Activated CD8-positive, alpha-beta T cell treated with anti-CD3 and anti-CD28 coated beads for 36 hours (primary cell): ENCODE measurements at regions of chr14 and their contacts with region 1.

Region 1: GRCh38 chr14:23631702-23632460 is 4.3 kb upstream of the DHRS2 start:
- DNase-seq: peak; percentile 73
- ATAC-seq: peak; percentile 89
- H3K4me3 Mint-ChIP-seq: peak overlapping the region; percentile 42
- H3K27ac Mint-ChIP-seq: no peak overlapping the region
- H3K4me1 Mint-ChIP-seq: peaks cover 4% of the 10 kb centered on the region
- H3K27me3 Mint-ChIP-seq: no peaks in the 10 kb centered on the region
- CTCF ChIP-seq: peak; percentile 97

Region 2: GRCh38 chr14:22982439-22983245 is 649.2 kb before region 1 on chr14 and contains the start of gene AJUBA:
- CTCF ChIA-PET with region 1: no interaction called
- POLR2A ChIA-PET with region 1: no interaction called
- intact Hi-C with region 1: no loop called
- DNase-seq: peak; percentile 84
- ATAC-seq: peak; percentile 76
- H3K4me3 Mint-ChIP-seq: no peak within 1 kb of the TSS
- H3K27ac Mint-ChIP-seq: no peak within 1 kb of the TSS
- H3K4me1 Mint-ChIP-seq: peaks cover 10% of the 10 kb centered on the region
- H3K27me3 Mint-ChIP-seq: no peaks in the 10 kb centered on the region
- CTCF ChIP-seq: no peak
- total RNA-seq, gene AJUBA: 2.3 to 2.6 TPM

Region 3: GRCh38 chr14:23605931-23606585 is 25.8 kb before region 1 on chr14:
- CTCF ChIA-PET with region 1: interaction called, 73 read pairs
- POLR2A ChIA-PET with region 1: no interaction called
- intact Hi-C with region 1: no loop called
- DNase-seq: peak; percentile 49
- ATAC-seq: peak; percentile 88
- H3K4me3 Mint-ChIP-seq: no peak overlapping the region
- H3K27ac Mint-ChIP-seq: peak overlapping the region; percentile 88
- H3K4me1 Mint-ChIP-seq: peaks cover 45% of the 10 kb centered on the region
- H3K27me3 Mint-ChIP-seq: no peaks in the 10 kb centered on the region
- CTCF ChIP-seq: no peak

Region 4: GRCh38 chr14:23646648-23647549 is 15.0 kb after region 1 on chr14:
- CTCF ChIA-PET with region 1: interaction called, 54 read pairs
- POLR2A ChIA-PET with region 1: interaction called, 4 read pairs
- intact Hi-C with region 1: no loop called
- DNase-seq: peak; percentile 15
- ATAC-seq: peak; percentile 42
- H3K4me3 Mint-ChIP-seq: no peak overlapping the region
- H3K27ac Mint-ChIP-seq: no peak overlapping the region
- H3K4me1 Mint-ChIP-seq: peaks cover 3% of the 10 kb centered on the region
- H3K27me3 Mint-ChIP-seq: no peaks in the 10 kb centered on the region
- CTCF ChIP-seq: no peak

Region 5: DNA sequence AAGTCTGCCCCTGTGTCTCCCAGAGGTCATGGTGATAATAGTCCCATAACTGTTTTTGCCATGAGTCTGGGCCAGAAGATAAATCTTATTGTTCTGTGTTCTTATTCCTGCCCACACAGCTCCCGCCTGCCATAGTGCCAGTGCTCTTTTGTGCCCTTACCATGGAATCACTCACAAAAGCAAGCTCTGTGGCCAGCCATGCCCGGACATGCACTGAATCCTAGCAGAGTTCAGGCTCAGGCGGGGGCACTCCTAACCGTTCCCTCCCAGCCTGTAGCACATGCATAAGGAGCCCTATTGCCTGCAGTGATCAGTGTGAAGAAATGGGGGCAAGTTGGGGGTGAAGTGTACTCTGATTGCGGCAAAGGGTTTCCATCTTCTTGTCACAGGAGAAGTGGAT is 37.6 kb after region 1 on chr14:
- CTCF ChIA-PET with region 1: interaction called, 12 read pairs
- POLR2A ChIA-PET with region 1: no interaction called
- intact Hi-C with region 1: no loop called
- DNase-seq: no peak
- ATAC-seq: no peak
- H3K4me3 Mint-ChIP-seq: no peak overlapping the region
- H3K27ac Mint-ChIP-seq: no peak overlapping the region
- H3K4me1 Mint-ChIP-seq: no peaks in the 10 kb centered on the region
- H3K27me3 Mint-ChIP-seq: peaks cover 3% of the 10 kb centered on the region
- CTCF ChIP-seq: no peak

Region 6: GRCh38 chr14:23727566-23728335 is 95.9 kb after region 1 on chr14:
- CTCF ChIA-PET with region 1: interaction called, 10 read pairs
- POLR2A ChIA-PET with region 1: no interaction called
- intact Hi-C with region 1: no loop called
- DNase-seq: no peak
- ATAC-seq: peak; percentile 60
- H3K4me3 Mint-ChIP-seq: no peak overlapping the region
- H3K27ac Mint-ChIP-seq: no peak overlapping the region
- H3K4me1 Mint-ChIP-seq: no peaks in the 10 kb centered on the region
- H3K27me3 Mint-ChIP-seq: no peaks in the 10 kb centered on the region
- CTCF ChIP-seq: peak; percentile 50

Region 7: GRCh38 chr14:24518851-24519250 is 887.0 kb after region 1 on chr14:
- CTCF ChIA-PET with region 1: no interaction called
- POLR2A ChIA-PET with region 1: no interaction called
- intact Hi-C with region 1: no loop called
- DNase-seq: no peak
- ATAC-seq: no peak
- H3K4me3 Mint-ChIP-seq: no peak overlapping the region
- H3K27ac Mint-ChIP-seq: no peak overlapping the region
- H3K4me1 Mint-ChIP-seq: peaks cover 5% of the 10 kb centered on the region
- H3K27me3 Mint-ChIP-seq: peaks cover 11% of the 10 kb centered on the region
- CTCF ChIP-seq: no peak

Region 8: GRCh38 chr14:24595073-24595808 is 963.4 kb after region 1 on chr14:
- CTCF ChIA-PET with region 1: no interaction called
- POLR2A ChIA-PET with region 1: no interaction called
- intact Hi-C with region 1: no loop called
- DNase-seq: no peak
- ATAC-seq: no peak
- H3K4me3 Mint-ChIP-seq: no peak overlapping the region
- H3K27ac Mint-ChIP-seq: no peak overlapping the region
- H3K4me1 Mint-ChIP-seq: peaks cover 6% of the 10 kb centered on the region
- H3K27me3 Mint-ChIP-seq: peaks cover 18% of the 10 kb centered on the region
- CTCF ChIP-seq: no peak